ENCODE measurements at regions of chr20 and their contacts with region 1.

Region 1: GRCh38 chr20:63009045-63009961 is 2.5 kb upstream of the BHLHE23 start:
- DNase-seq: peak; percentile 60
- ATAC-seq: peak; percentile 73
- H3K4me3 ChIP-seq: peak overlapping the region; percentile 78
- H3K27ac ChIP-seq: peak overlapping the region; percentile 97
- H3K4me1 ChIP-seq: peaks cover 24% of the 10 kb centered on the region
- H3K27me3 ChIP-seq: peaks cover 12 to 14% of the 10 kb centered on the region in 2 experiments
- CTCF ChIP-seq: peak; percentile 82 to 99 (median 95); a peak in 5 of 6 replicates
- EP300 ChIP-seq: peak in 1 of 2 experiments; percentile 36; a peak in 1 of 4 replicates
- POLR2A ChIP-seq: peak; percentile 75
- RAD21 ChIP-seq: peak; percentile 96

Region 2: GRCh38 chr20:62822788-62823651 is 186.3 kb before region 1 on chr20:
- CTCF ChIA-PET with region 1: interaction called, 14 read pairs
- POLR2A ChIA-PET with region 1: interaction called, 3 read pairs
- RAD21 ChIA-PET with region 1: interaction called, 11 read pairs
- SMC1A ChIA-PET with region 1: interaction called, 11 read pairs
- in situ Hi-C with region 1: no loop called
- intact Hi-C with region 1: loop called (anchors 1 kb)
- DNase-seq: no peak
- ATAC-seq: peak; percentile 88
- H3K4me3 ChIP-seq: no peak overlapping the region
- H3K27ac ChIP-seq: no peak overlapping the region
- H3K4me1 ChIP-seq: 0 out of 2 replicates have a peak, but pooled peaks cover 2% of the 10 kb centered on the region
- H3K27me3 ChIP-seq: peaks cover 0 to 2% of the 10 kb centered on the region in 2 experiments; a peak in 3 of 4 replicates
- CTCF ChIP-seq: peak; percentile 69 to 80 (median 74)
- EP300 ChIP-seq: no peak
- POLR2A ChIP-seq: no peak
- RAD21 ChIP-seq: peak; percentile 72

Region 3: GRCh38 chr20:62972270-62973032 is 36.9 kb before region 1 on chr20:
- CTCF ChIA-PET with region 1: interaction called, 28 read pairs
- POLR2A ChIA-PET with region 1: interaction called, 37 read pairs
- RAD21 ChIA-PET with region 1: interaction called, 16 read pairs
- SMC1A ChIA-PET with region 1: interaction called, 15 read pairs
- in situ Hi-C with region 1: loop called (anchors 5 kb)
- intact Hi-C with region 1: loop called (anchors 1 kb)
- DNase-seq: peak; percentile 49
- ATAC-seq: peak; percentile 89
- H3K4me3 ChIP-seq: no peak overlapping the region
- H3K27ac ChIP-seq: no peak overlapping the region
- H3K4me1 ChIP-seq: peaks cover 15% of the 10 kb centered on the region
- H3K27me3 ChIP-seq: peaks cover 0 to 6% of the 10 kb centered on the region in 2 experiments; a peak in 2 of 4 replicates
- CTCF ChIP-seq: peak; percentile 96 to 98 (median 98); a peak in 5 of 6 replicates
- EP300 ChIP-seq: no peak; a peak in 1 of 4 replicates
- POLR2A ChIP-seq: no peak
- RAD21 ChIP-seq: peak; percentile 91

Region 4: GRCh38 chr20:63025534-63026331 is 16.4 kb after region 1 on chr20:
- CTCF ChIA-PET with region 1: interaction called, 12 read pairs
- POLR2A ChIA-PET with region 1: interaction called, 10 read pairs
- RAD21 ChIA-PET with region 1: interaction called, 20 read pairs
- SMC1A ChIA-PET with region 1: interaction called, 11 read pairs
- in situ Hi-C with region 1: no loop called
- intact Hi-C with region 1: no loop called
- DNase-seq: no peak
- ATAC-seq: peak; percentile 23
- H3K4me3 ChIP-seq: no peak overlapping the region
- H3K27ac ChIP-seq: no peak overlapping the region
- H3K4me1 ChIP-seq: peaks cover 5% of the 10 kb centered on the region; the same call in 1 of the 2 replicates
- H3K27me3 ChIP-seq: no peaks in the 10 kb centered on the region
- CTCF ChIP-seq: no peak
- EP300 ChIP-seq: no peak
- POLR2A ChIP-seq: peak; percentile 7; the same call in 1 of the 2 replicates
- RAD21 ChIP-seq: no peak

Region 5: GRCh38 chr20:63056236-63056948 is 47.1 kb after region 1 on chr20:
- CTCF ChIA-PET with region 1: interaction called, 6 read pairs
- POLR2A ChIA-PET with region 1: no interaction called
- RAD21 ChIA-PET with region 1: interaction called, 4 read pairs
- SMC1A ChIA-PET with region 1: interaction called, 17 read pairs
- in situ Hi-C with region 1: no loop called
- intact Hi-C with region 1: loop called (anchors 5 kb)
- DNase-seq: no peak
- ATAC-seq: peak; percentile 77
- H3K4me3 ChIP-seq: no peak overlapping the region
- H3K27ac ChIP-seq: no peak overlapping the region
- H3K4me1 ChIP-seq: no peaks in the 10 kb centered on the region
- H3K27me3 ChIP-seq: no peaks in the 10 kb centered on the region
- CTCF ChIP-seq: peak; percentile 65 to 85 (median 65)
- EP300 ChIP-seq: no peak
- POLR2A ChIP-seq: no peak
- RAD21 ChIP-seq: peak; percentile 72

Region 6: DNA sequence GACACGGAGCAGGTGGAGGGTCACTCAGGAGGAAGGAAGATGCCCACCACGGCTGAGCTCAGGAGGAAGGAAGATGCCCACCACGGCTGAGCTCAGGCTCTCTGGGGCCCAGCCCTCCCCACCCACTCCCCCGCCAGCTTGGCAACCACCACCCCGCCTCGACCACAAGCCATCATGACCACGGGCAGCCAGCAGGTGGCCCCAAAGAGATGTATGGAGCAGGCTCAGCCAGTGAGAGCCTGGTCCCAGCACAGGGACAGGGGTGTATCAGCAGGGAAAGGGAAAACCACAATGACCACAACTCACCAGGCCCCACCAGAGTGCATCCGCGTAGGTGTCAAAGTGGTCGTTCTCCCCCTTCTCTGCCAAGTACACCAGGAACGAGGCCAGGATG is 432.8 kb after region 1 on chr20:
- CTCF ChIA-PET with region 1: no interaction called
- POLR2A ChIA-PET with region 1: no interaction called
- RAD21 ChIA-PET with region 1: no interaction called
- SMC1A ChIA-PET with region 1: no interaction called
- in situ Hi-C with region 1: no loop called
- intact Hi-C with region 1: no loop called
- DNase-seq: peak; percentile 26
- ATAC-seq: peak; percentile 78
- H3K4me3 ChIP-seq: no peak overlapping the region
- H3K27ac ChIP-seq: peak overlapping the region; percentile 53; the same call in 1 of the 2 replicates
- H3K4me1 ChIP-seq: peaks cover 16% of the 10 kb centered on the region
- H3K27me3 ChIP-seq: no peaks in the 10 kb centered on the region; a peak in 1 of 4 replicates
- CTCF ChIP-seq: peak; percentile 37 to 72 (median 55); a peak in 5 of 6 replicates
- EP300 ChIP-seq: no peak
- POLR2A ChIP-seq: no peak
- RAD21 ChIP-seq: peak; percentile 47